ENCODE measurements at regions of chr4 and their contacts with region 1.

Region 1: GRCh38 chr4:86497980-86498862 is 95.9 kb upstream of the PTPN13 start:
- DNase-seq: no peak
- ATAC-seq: peak; percentile 93
- H3K4me3 ChIP-seq: no peak overlapping the region
- H3K27ac ChIP-seq: no peak overlapping the region
- H3K4me1 ChIP-seq: no peaks in the 10 kb centered on the region
- H3K27me3 ChIP-seq: no peaks in the 10 kb centered on the region
- CTCF ChIP-seq: peak; percentile 74 to 85 (median 84); a peak in 5 of 6 replicates
- EP300 ChIP-seq: no peak
- POLR2A ChIP-seq: no peak
- RAD21 ChIP-seq: peak; percentile 88

Region 2: DNA sequence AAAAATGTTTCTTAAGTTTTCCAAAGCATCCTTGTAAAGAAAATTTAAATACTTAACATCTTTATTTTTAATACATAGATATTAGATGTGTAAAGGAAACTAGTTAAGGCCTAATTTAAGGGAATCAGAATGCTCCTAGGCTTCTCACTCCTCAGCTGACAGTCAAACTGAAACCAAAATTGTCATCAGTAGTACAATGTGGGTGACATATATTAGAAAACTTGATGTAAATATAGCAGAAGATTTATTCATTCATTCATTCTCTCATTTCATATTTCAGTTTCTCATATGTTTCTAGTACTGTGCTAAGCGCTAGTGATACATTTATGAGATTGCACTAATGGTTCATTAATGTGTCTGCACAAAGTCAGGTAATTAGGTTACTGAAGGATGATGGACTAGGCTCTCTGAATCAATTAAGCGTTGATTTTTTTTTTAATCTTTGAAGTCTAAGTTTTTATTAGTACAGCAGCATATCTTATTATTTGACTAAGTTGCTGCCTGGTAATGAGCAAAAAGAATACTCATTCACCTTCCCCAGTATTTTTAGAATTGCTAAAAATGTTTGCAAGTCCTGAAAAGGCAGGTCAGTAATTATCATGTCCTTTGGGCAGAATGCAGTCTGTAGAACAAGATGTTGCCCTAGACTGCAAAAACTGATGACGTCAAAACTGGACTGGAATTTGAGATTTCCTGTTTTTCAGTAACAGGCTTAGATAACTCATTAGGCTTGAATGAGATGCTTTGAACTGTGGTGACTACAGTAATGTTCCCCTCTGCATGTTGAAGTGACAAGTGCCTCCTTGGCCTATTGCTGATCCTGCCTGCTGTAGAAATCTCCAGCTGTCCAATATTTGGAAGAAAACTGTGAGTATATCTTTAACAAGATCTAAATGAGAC is 894.5 kb before region 1 on chr4:
- CTCF ChIA-PET with region 1: no interaction called
- POLR2A ChIA-PET with region 1: no interaction called
- RAD21 ChIA-PET with region 1: no interaction called
- SMC1A ChIA-PET with region 1: no interaction called
- in situ Hi-C with region 1: no loop called
- intact Hi-C with region 1: no loop called
- DNase-seq: no peak
- ATAC-seq: peak; percentile 70
- H3K4me3 ChIP-seq: no peak overlapping the region
- H3K27ac ChIP-seq: no peak overlapping the region
- H3K4me1 ChIP-seq: peaks cover 13% of the 10 kb centered on the region; the same call in 1 of the 2 replicates
- H3K27me3 ChIP-seq: no peaks in the 10 kb centered on the region
- CTCF ChIP-seq: no peak
- EP300 ChIP-seq: no peak
- POLR2A ChIP-seq: no peak
- RAD21 ChIP-seq: no peak

Region 3: DNA sequence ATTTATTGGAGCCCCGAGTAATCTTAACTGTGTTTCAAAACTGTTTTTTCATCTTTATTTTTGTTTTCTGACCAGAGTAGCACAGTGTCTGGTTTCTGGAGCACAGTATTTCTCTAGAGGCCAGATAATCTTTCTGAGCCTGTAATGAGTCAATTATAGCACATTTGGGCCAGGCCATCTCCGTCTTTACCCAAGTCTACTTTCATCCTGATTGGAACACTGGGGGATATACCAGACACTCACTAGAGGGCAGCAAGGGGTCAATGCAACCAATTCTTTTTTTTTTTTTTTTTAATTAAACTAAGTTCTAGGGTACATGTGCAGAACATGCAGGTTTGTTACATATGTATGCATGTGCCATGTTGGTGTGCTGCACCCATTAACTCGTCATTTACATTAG is 741.3 kb before region 1 on chr4:
- CTCF ChIA-PET with region 1: no interaction called
- POLR2A ChIA-PET with region 1: no interaction called
- RAD21 ChIA-PET with region 1: no interaction called
- SMC1A ChIA-PET with region 1: no interaction called
- in situ Hi-C with region 1: no loop called
- intact Hi-C with region 1: no loop called
- DNase-seq: no peak
- ATAC-seq: peak; percentile 79
- H3K4me3 ChIP-seq: no peak overlapping the region
- H3K27ac ChIP-seq: no peak overlapping the region
- H3K4me1 ChIP-seq: no peaks in the 10 kb centered on the region
- H3K27me3 ChIP-seq: no peaks in the 10 kb centered on the region
- CTCF ChIP-seq: peak; percentile 49 to 60 (median 50); a peak in 5 of 6 replicates
- EP300 ChIP-seq: no peak
- POLR2A ChIP-seq: no peak
- RAD21 ChIP-seq: peak; percentile 71

Region 4: GRCh38 chr4:86380243-86380642 is 118.0 kb before region 1 on chr4:
- CTCF ChIA-PET with region 1: no interaction called
- POLR2A ChIA-PET with region 1: no interaction called
- RAD21 ChIA-PET with region 1: no interaction called
- SMC1A ChIA-PET with region 1: no interaction called
- in situ Hi-C with region 1: no loop called
- intact Hi-C with region 1: no loop called
- DNase-seq: no peak
- ATAC-seq: no peak
- H3K4me3 ChIP-seq: no peak overlapping the region
- H3K27ac ChIP-seq: no peak overlapping the region
- H3K4me1 ChIP-seq: no peaks in the 10 kb centered on the region
- H3K27me3 ChIP-seq: no peaks in the 10 kb centered on the region
- CTCF ChIP-seq: no peak
- EP300 ChIP-seq: no peak
- POLR2A ChIP-seq: no peak
- RAD21 ChIP-seq: no peak

Region 5: GRCh38 chr4:86544310-86544966 is 46.2 kb after region 1 on chr4:
- CTCF ChIA-PET with region 1: interaction called, 14 read pairs
- POLR2A ChIA-PET with region 1: no interaction called
- RAD21 ChIA-PET with region 1: interaction called, 18 read pairs
- SMC1A ChIA-PET with region 1: interaction called, 10 read pairs
- in situ Hi-C with region 1: no loop called
- intact Hi-C with region 1: no loop called
- DNase-seq: no peak
- ATAC-seq: peak; percentile 89
- H3K4me3 ChIP-seq: no peak overlapping the region
- H3K27ac ChIP-seq: peak overlapping the region; percentile 35; the same call in 1 of the 2 replicates
- H3K4me1 ChIP-seq: peaks cover 12% of the 10 kb centered on the region
- H3K27me3 ChIP-seq: no peaks in the 10 kb centered on the region; a peak in 1 of 4 replicates
- CTCF ChIP-seq: no peak
- EP300 ChIP-seq: peak in 1 of 2 experiments; percentile 68; a peak in 1 of 4 replicates
- POLR2A ChIP-seq: no peak
- RAD21 ChIP-seq: no peak

Region 6: DNA sequence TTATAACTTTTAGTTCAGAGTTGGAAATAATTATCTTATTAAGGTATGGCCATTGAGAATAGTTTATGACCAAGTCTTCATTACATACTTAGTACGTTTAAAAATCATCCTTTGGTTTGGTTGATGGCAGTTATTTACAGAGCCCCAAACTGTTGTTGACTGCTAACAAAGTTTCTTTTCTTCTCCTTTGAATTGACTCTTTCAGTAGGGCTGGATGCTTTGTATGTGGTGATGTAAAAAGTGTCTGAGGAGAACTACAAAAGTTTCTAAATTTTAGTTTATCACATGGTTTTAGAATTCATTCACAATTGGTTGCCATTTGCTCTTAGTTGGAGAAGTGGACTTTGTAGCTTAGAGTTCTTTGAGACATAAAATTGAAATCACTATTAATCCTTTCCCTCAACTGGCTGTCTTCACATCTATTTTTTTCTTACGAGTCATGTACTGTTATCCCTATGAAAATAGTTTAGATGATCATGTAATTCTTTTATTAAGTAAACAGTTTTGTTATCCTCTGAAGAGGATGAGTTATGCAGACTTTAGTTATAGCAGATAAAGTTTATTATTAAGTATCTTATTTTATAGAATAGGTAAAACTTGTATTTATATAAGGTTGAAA is 110.6 kb after region 1 on chr4:
- CTCF ChIA-PET with region 1: interaction called, 10 read pairs
- POLR2A ChIA-PET with region 1: no interaction called
- RAD21 ChIA-PET with region 1: interaction called, 5 read pairs
- SMC1A ChIA-PET with region 1: interaction called, 85 read pairs
- in situ Hi-C with region 1: no loop called
- intact Hi-C with region 1: no loop called
- DNase-seq: no peak
- ATAC-seq: no peak
- H3K4me3 ChIP-seq: no peak overlapping the region
- H3K27ac ChIP-seq: no peak overlapping the region
- H3K4me1 ChIP-seq: no peaks in the 10 kb centered on the region
- H3K27me3 ChIP-seq: 0 out of 4 replicates have a peak, but pooled peaks cover 0 to 2% of the 10 kb centered on the region in 2 experiments
- CTCF ChIP-seq: no peak
- EP300 ChIP-seq: no peak
- POLR2A ChIP-seq: no peak
- RAD21 ChIP-seq: no peak

Region 7: GRCh38 chr4:86685401-86685800 is 187.2 kb after region 1 on chr4:
- CTCF ChIA-PET with region 1: interaction called, 6 read pairs
- POLR2A ChIA-PET with region 1: no interaction called
- RAD21 ChIA-PET with region 1: no interaction called
- SMC1A ChIA-PET with region 1: interaction called, 14 read pairs
- in situ Hi-C with region 1: no loop called
- intact Hi-C with region 1: loop called (anchors 5 kb)
- DNase-seq: no peak
- ATAC-seq: no peak
- H3K4me3 ChIP-seq: no peak overlapping the region
- H3K27ac ChIP-seq: no peak overlapping the region
- H3K4me1 ChIP-seq: no peaks in the 10 kb centered on the region
- H3K27me3 ChIP-seq: no peaks in the 10 kb centered on the region
- CTCF ChIP-seq: no peak
- EP300 ChIP-seq: no peak
- POLR2A ChIP-seq: no peak
- RAD21 ChIP-seq: no peak

Region 8: GRCh38 chr4:86788826-86789225 is 290.6 kb after region 1 on chr4:
- CTCF ChIA-PET with region 1: interaction called, 26 read pairs
- POLR2A ChIA-PET with region 1: no interaction called
- RAD21 ChIA-PET with region 1: interaction called, 6 read pairs
- SMC1A ChIA-PET with region 1: interaction called, 8 read pairs
- in situ Hi-C with region 1: no loop called
- intact Hi-C with region 1: no loop called
- DNase-seq: no peak
- ATAC-seq: no peak
- H3K4me3 ChIP-seq: no peak overlapping the region
- H3K27ac ChIP-seq: no peak overlapping the region
- H3K4me1 ChIP-seq: no peaks in the 10 kb centered on the region
- H3K27me3 ChIP-seq: no peaks in the 10 kb centered on the region
- CTCF ChIP-seq: no peak
- EP300 ChIP-seq: no peak
- POLR2A ChIP-seq: no peak
- RAD21 ChIP-seq: no peak

Region 9: GRCh38 chr4:87006676-87007527 is 508.7 kb after region 1 on chr4:
- CTCF ChIA-PET with region 1: no interaction called
- POLR2A ChIA-PET with region 1: no interaction called
- RAD21 ChIA-PET with region 1: no interaction called
- SMC1A ChIA-PET with region 1: no interaction called
- in situ Hi-C with region 1: no loop called
- intact Hi-C with region 1: loop called (anchors 10 kb)
- DNase-seq: peak; percentile 71
- ATAC-seq: peak; percentile 82
- H3K4me3 ChIP-seq: peak overlapping the region; percentile 78
- H3K27ac ChIP-seq: peak overlapping the region; percentile 93
- H3K4me1 ChIP-seq: peaks cover 17% of the 10 kb centered on the region
- H3K27me3 ChIP-seq: no peaks in the 10 kb centered on the region
- CTCF ChIP-seq: peak in 2 of 3 experiments; percentile 33 to 34; a peak in 3 of 6 replicates
- EP300 ChIP-seq: 0 out of 4 replicates have a peak, but pooled peaks of 1 of the 2 experiments have one; percentile 17
- POLR2A ChIP-seq: peak; percentile 97
- RAD21 ChIP-seq: no peak

Region 10: DNA sequence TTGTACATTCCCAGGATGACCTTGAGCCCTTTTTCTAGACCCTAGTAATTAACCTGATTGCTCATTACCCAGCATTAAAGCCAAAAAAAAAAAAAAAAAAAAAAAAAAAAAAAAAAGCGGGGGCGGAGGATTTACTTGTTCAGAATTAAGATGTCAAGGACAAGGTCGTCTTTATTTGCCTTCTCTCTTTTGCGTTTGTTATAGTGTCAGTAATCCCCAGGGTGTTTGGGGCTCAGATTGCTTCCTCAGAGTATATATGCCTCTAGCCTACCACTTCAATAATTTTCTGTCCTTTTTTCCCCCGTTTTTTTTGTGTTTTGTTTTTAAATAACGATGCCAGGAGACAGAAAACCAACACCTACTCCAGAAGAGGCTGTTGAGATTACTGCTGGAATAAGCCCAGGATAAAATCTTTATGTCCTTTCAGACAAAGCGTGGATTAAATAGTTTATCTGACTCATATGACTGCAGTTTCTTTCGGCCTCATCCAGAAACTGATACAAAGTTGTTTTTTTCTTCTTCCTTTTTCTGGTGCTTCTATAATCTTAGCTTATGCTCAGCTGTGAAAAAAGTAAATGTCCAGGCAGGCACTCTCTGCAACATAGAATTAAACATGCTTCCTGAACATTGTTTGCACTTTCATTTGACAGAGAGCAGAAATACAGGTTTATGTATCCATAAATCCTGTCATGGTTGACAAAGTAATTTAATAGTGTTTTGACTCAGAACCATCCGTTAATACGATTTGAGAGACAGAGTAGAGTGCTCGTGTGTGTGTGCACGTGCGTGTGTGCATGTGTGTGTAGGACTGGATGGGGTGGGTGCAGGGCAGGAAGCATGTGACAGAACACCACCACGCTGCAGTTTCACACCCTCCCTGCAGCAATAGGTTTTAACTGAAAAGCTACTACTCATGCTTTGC is 575.2 kb after region 1 on chr4:
- CTCF ChIA-PET with region 1: no interaction called
- POLR2A ChIA-PET with region 1: no interaction called
- RAD21 ChIA-PET with region 1: no interaction called
- SMC1A ChIA-PET with region 1: no interaction called
- in situ Hi-C with region 1: no loop called
- intact Hi-C with region 1: no loop called
- DNase-seq: peak; percentile 93
- ATAC-seq: peak; percentile 93
- H3K4me3 ChIP-seq: peak overlapping the region; percentile 65; the same call in 1 of the 2 replicates
- H3K27ac ChIP-seq: peak overlapping the region; percentile 98
- H3K4me1 ChIP-seq: peaks cover 17% of the 10 kb centered on the region
- H3K27me3 ChIP-seq: no peaks in the 10 kb centered on the region
- CTCF ChIP-seq: no peak
- EP300 ChIP-seq: peak; percentile 65 to 67; a peak in 3 of 4 replicates
- POLR2A ChIP-seq: peak; percentile 62
- RAD21 ChIP-seq: no peak